Motor neuron (in vitro differentiated cells): ENCODE measurements at regions of chr11 and their contacts with region 1.

Region 1: GRCh38 chr11:30855383-30856006 is 269.3 kb upstream of the MPPED2 start:
- ATAC-seq: peak in 1 of 8 experiments; percentile 26
- H3K4me3 ChIP-seq: no peak overlapping the region
- H3K27ac ChIP-seq: no peak overlapping the region
- H3K4me1 ChIP-seq: peaks cover 12 to 13% of the 10 kb centered on the region in 2 donors

Region 2: DNA sequence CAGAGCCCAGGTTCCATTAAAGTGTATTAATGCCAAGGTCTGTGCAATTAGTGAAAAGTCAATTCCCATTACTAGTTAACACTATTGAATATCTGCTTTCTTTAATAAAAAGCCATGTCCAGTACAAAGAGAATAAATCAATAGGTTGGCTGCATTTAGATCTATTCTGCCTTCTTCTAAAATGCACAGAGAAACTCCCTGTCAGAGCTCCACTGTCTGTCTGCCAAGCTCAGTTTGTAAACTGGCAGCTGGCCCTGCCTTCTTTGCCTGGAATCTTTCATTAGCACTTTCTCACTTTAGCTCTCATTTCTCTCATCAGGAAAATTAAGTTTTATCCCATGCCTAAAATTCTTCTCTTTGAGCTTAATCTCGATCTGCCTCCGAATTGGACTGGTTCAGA is 497.0 kb before region 1 on chr11:
- in situ Hi-C with region 1: loop called in 2 of 9 experiments (anchors 10 to 25 kb)
- ATAC-seq: no peak
- H3K4me3 ChIP-seq: no peak overlapping the region
- H3K27ac ChIP-seq: no peak overlapping the region
- H3K4me1 ChIP-seq: no peaks in the 10 kb centered on the region

Region 3: GRCh38 chr11:30956751-30957150 is 101.3 kb after region 1 on chr11:
- in situ Hi-C with region 1: no loop called
- ATAC-seq: no peak
- H3K4me3 ChIP-seq: no peak overlapping the region
- H3K27ac ChIP-seq: no peak overlapping the region
- H3K4me1 ChIP-seq: no peaks in the 10 kb centered on the region